ENCODE measurements at regions of chr7 and their contacts with region 1.

Region 1: DNA sequence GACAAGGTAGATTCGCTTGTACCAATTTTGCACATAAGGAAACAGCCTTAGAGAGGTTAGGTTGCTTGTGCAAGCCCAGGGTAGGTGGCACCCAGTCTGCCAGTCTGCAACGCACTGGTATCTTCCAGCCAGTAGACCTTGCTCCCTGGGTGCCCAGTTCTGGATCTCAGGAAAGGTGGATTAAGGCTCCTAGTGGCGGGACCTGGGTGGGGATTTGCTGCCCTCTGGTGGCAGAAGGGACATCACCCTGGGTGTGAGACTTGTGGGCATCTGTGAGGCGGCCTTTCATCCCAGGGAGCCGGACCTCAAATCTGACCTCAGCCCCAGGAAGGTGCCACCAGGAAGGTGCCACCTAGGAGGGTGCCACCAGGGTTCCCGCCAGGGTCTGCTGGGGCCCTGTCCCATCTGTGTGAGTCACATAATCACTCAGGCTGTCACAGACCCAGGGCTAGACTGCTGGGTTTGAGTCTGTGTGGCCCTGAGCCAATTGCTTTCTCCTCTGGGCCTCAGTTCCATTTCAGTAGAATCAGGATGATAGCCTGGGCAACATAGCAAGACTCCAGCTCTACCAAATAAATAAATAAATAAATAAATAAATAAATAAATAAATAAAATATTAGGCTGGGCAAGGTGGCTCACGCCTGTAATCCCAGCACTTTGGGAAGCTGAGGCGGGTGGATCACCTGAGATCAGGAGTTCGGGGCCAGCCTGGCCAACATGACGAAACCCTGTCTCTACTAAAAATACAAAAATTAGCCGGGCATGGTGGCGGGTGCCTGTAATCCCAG is 5.3 kb upstream of the PRKRIP1 start:
- DNase-seq: peak; percentile 63 to 92
- H3K4me3 ChIP-seq: no peak overlapping the region
- H3K4me1 ChIP-seq: no peaks in the 10 kb centered on the region
- H3K27me3 ChIP-seq: no peaks in the 10 kb centered on the region

Region 2: DNA sequence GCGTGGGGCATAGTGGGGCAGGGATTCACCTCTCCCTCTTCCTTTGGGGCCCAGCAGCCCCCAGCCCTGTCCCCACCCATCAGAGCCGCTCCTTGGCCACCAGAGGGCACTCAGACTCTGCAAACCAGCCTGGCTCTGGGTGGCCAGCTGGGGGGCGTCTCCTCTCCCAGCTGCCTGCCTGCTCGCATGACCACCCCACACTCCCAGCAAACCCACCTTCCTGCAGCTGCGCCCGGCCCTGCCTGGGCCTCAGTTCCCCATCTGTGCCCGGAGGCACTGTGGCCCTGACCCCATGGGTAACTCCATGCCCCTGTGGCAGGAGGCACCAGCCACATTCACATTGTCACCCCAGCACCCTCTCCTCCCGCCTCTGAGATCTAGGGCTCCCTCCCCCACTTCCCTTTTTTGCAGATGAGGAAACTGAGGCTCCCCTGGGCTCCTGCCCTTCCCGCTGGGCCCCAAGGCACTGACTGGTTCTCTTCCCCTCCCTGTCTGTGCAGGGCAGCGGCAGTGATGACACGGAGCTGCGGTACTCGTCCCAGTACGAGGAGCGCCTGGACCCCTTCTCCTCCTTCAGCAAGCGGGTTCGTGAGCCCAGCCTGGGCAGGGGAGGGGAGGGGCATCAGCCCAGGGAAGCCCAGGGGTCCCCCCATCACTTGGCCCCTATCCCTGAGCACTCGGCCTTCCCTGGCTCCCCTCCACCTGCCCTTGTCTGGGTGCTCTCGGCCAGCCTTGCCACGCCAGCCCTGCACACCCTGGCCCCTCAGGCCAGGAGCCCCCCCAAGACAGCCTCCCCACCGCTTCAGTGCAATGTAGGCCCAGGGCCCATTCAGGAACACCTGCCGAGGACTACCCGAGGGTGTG is 111.1 kb before region 1 on chr7:
- in situ Hi-C with region 1: loop called (anchors 5 kb)
- DNase-seq: peak; percentile 65 to 86
- H3K4me3 ChIP-seq: no peak overlapping the region
- H3K4me1 ChIP-seq: no peaks in the 10 kb centered on the region
- H3K27me3 ChIP-seq: no peaks in the 10 kb centered on the region